Esophagus squamous epithelium (tissue), 5 donors: ENCODE measurements at regions of chr14 and their contacts with region 1.

Region 1: DNA sequence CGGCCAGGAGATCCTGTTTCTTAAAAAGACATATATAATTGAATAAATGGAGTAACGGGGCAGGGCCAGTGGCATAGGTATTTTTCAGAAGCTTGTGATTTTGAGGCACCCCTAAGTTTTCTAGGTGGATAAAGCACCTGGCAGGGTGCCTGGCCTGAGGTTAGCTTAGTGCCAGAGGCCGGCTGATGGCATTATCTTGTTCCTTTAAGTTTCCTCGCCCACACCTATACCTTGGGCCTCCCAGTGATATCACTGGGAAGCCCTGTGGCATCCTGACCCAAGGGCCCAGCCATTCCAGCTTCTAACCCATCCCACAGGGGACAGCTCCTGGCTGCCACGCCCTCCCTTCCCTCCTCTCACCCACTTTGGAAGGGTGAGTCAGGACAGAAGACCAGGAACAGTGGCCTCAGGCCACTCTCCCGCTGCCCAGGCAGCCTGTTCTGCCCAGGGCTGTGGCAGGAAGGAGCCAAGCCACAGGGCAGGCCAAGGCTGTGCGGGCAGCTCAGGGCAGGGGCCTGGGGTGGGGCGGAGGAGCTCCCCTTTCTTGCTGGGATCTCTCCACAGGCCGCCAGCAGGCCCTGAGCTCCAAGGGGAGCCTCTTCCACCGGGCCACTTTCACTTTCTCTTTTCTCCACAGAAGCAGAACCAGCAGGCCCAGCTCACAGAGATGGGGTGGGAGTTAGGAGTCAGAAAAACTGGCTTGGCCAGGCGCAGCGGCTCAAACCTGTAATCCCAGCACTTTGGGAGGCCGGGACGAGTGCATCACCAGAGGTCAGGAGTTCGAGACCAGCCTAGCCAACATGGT is 75.1 kb downstream of the IRF2BPL start:
- DNase-seq: no peak
- H3K4me3 ChIP-seq: peak overlapping the region in 3 of 4 donors; percentile 18 to 55 (median 33)
- H3K27ac ChIP-seq: peak overlapping the region; percentile 84 to 96 (median 92)
- H3K4me1 ChIP-seq: peaks cover 64 to 92% (median 71%) of the 10 kb centered on the region in 3 donors
- H3K27me3 ChIP-seq: no peaks in the 10 kb centered on the region
- CTCF ChIP-seq: peak in 1 of 6 experiments; percentile 16
- POLR2A ChIP-seq: peak in 1 of 4 donors; percentile 34

Region 2: GRCh38 chr14:77033622-77034521 is 80.5 kb after region 1 on chr14:
- intact Hi-C with region 1: loop called (anchors 5 kb)
- DNase-seq: no peak
- H3K4me3 ChIP-seq: peak overlapping the region; percentile 25 to 73 (median 52)
- H3K27ac ChIP-seq: peak overlapping the region; percentile 99 to 100 (median 99)
- H3K4me1 ChIP-seq: peaks cover 73 to 100% (median 88%) of the 10 kb centered on the region in 3 donors
- H3K27me3 ChIP-seq: no peaks in the 10 kb centered on the region
- CTCF ChIP-seq: peak in 1 of 6 experiments; percentile 1
- POLR2A ChIP-seq: peak in 2 of 4 donors; percentile 26 to 34